ENCODE measurements at regions of chr16 and their contacts with region 1.

Region 1: GRCh38 chr16:49592546-49593423 is 219.2 kb downstream of the C16orf78 start:
- DNase-seq: no peak
- H3K4me3 ChIP-seq: no peak overlapping the region
- H3K27ac ChIP-seq: no peak overlapping the region
- H3K4me1 ChIP-seq: peaks cover 0 to 21% (median 10%) of the 10 kb centered on the region in 3 donors
- H3K27me3 ChIP-seq: no peaks in the 10 kb centered on the region
- CTCF ChIP-seq: peak; percentile 50 to 76 (median 56)
- POLR2A ChIP-seq: no peak

Region 2: GRCh38 chr16:49419006-49419405 is 173.8 kb before region 1 on chr16:
- intact Hi-C with region 1: loop called (anchors 10 kb)
- DNase-seq: no peak
- H3K4me3 ChIP-seq: no peak overlapping the region
- H3K27ac ChIP-seq: no peak overlapping the region
- H3K4me1 ChIP-seq: no peaks in the 10 kb centered on the region
- H3K27me3 ChIP-seq: peaks cover 0 to 9% (median 0%) of the 10 kb centered on the region in 4 donors
- CTCF ChIP-seq: no peak
- POLR2A ChIP-seq: no peak

Region 3: GRCh38 chr16:49474741-49475140 is 118.0 kb before region 1 on chr16:
- intact Hi-C with region 1: no loop called
- DNase-seq: no peak
- H3K4me3 ChIP-seq: no peak overlapping the region
- H3K27ac ChIP-seq: no peak overlapping the region
- H3K4me1 ChIP-seq: no peaks in the 10 kb centered on the region
- H3K27me3 ChIP-seq: no peaks in the 10 kb centered on the region
- CTCF ChIP-seq: no peak
- POLR2A ChIP-seq: no peak

Region 4: GRCh38 chr16:49491771-49492761 is 100.7 kb before region 1 on chr16:
- intact Hi-C with region 1: loop called (anchors 10 kb)
- DNase-seq: no peak
- H3K4me3 ChIP-seq: peak overlapping the region; percentile 6 to 59 (median 37)
- H3K27ac ChIP-seq: peak overlapping the region in 3 of 4 donors; percentile 10 to 42 (median 29)
- H3K4me1 ChIP-seq: peaks cover 0 to 13% (median 9%) of the 10 kb centered on the region in 3 donors
- H3K27me3 ChIP-seq: peaks cover 0 to 13% (median 0%) of the 10 kb centered on the region in 4 donors
- CTCF ChIP-seq: peak; percentile 76 to 92 (median 78)
- POLR2A ChIP-seq: no peak

Region 5: GRCh38 chr16:49652456-49653172 is 59.8 kb after region 1 on chr16:
- intact Hi-C with region 1: no loop called
- DNase-seq: no peak
- H3K4me3 ChIP-seq: peak overlapping the region in 1 of 4 donors; percentile 25
- H3K27ac ChIP-seq: peak overlapping the region in 3 of 4 donors; percentile 20 to 81 (median 66)
- H3K4me1 ChIP-seq: peaks cover 0 to 22% (median 0%) of the 10 kb centered on the region in 3 donors
- H3K27me3 ChIP-seq: no peaks in the 10 kb centered on the region
- CTCF ChIP-seq: no peak
- POLR2A ChIP-seq: no peak

Region 6: DNA sequence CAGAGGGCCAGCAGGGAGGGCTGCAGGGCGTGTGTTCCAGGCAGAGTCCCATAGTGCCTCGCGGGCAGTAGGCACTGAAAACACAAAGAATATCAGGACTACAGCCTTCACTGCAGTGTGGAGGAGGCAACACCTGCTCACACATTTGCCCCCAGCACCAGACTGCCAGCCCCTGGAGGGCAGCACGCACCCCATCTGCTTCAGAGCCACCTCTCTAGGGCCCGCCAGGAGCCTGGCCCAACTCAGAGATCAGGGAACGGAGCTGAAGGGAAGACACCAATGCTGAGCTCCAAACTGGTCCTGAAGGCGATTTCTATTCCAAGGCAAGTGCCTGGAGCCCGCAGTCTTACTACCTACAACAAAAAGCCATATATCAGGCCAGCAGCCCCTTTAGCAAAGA is 132.9 kb after region 1 on chr16:
- intact Hi-C with region 1: no loop called
- DNase-seq: no peak
- H3K4me3 ChIP-seq: no peak overlapping the region
- H3K27ac ChIP-seq: no peak overlapping the region
- H3K4me1 ChIP-seq: no peaks in the 10 kb centered on the region
- H3K27me3 ChIP-seq: no peaks in the 10 kb centered on the region
- CTCF ChIP-seq: no peak
- POLR2A ChIP-seq: no peak

Region 7: DNA sequence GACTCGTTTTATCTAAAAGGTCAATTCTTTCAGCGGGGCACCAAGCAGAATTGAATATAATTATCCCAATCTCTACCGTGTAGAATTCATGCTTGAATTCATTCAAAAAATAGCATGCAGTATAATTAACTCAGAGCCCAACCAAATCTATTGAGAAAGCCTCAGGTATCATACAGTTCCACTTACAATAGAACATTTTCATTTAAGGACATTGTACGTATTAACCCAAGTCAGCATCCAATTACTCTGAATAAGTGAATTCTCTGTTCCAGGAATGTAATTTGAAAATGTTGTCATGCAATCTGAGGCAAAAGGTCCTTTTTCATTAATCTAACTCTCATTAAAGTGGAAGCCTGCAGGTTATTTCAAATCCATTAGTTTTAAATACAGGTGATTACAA is 1479.8 kb after region 1 on chr16:
- intact Hi-C with region 1: no loop called
- DNase-seq: no peak
- H3K4me3 ChIP-seq: no peak overlapping the region
- H3K27ac ChIP-seq: no peak overlapping the region
- H3K4me1 ChIP-seq: no peaks in the 10 kb centered on the region
- H3K27me3 ChIP-seq: peaks cover 0 to 9% (median 0%) of the 10 kb centered on the region in 4 donors
- CTCF ChIP-seq: no peak
- POLR2A ChIP-seq: no peak

Measured in esophagus squamous epithelium (tissue), 5 donors.